KBM-7 (cell line): ENCODE measurements at regions of chr14 and their contacts with region 1.

Region 1: DNA sequence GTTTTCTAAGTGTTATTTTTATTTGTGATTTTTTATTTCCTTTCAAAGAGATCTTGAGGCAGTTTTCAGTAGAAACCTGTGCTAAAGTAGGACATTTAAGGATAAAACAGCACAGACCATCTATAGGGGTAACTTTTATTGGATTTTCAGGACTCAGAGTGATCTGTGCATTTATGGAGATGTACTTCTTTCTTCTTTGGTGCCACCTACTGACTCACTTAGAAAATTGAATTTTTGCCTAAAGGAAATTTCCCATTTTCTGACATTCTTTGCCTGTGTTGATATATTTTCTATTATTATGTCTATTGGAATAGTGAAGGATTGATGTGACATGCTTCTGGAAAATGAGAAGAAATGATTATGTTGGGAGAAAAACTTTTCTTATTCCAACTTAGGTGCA is 113.0 kb downstream of the UNC79 start:
- DNase-seq: peak; percentile 44

Region 2: GRCh38 chr14:93231129-93231979 is 312.4 kb before region 1 on chr14:
- in situ Hi-C with region 1: loop called (anchors 25 kb)
- DNase-seq: no peak